Activated CD4-positive, alpha-beta T cell treated with anti-CD3 and anti-CD28 coated beads, Interleukin-2, amount 10 ng/mL, durations not matched to agents 7 days and 5 days (primary cell): ENCODE measurements at regions of chr2 and their contacts with region 1.

Region 1: DNA sequence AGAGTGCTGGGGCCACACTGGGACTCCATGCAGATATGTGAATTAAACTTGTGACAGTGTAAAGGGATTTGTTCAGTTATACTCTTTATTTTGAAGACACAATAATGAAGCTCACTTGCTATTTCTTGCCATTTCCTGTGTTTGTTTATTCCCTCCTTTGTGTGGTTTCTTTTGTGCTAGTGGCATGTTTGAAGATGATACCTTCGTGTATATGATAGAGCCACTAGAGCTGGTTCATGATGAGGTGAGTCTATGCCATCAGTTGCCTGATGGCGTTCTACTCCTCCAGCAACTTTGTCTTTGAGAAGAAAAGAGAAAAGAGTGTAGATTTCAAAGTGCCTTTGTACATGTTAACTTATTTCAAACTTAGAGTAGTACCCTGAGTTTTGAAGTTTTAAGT is 99.2 kb upstream of the FAM237A start:
- DNase-seq: no peak
- H3K4me3 Mint-ChIP-seq: no peak overlapping the region
- H3K27ac Mint-ChIP-seq: peak overlapping the region; percentile 22
- H3K4me1 Mint-ChIP-seq: peaks cover 18% of the 10 kb centered on the region
- H3K27me3 Mint-ChIP-seq: peaks cover 8% of the 10 kb centered on the region

Region 2: GRCh38 chr2:206432432-206433082 is 110.5 kb before region 1 on chr2:
- CTCF ChIA-PET with region 1: no interaction called
- POLR2A ChIA-PET with region 1: interaction called, 16 read pairs
- DNase-seq: no peak
- H3K4me3 Mint-ChIP-seq: no peak overlapping the region
- H3K27ac Mint-ChIP-seq: no peak overlapping the region
- H3K4me1 Mint-ChIP-seq: no peaks in the 10 kb centered on the region
- H3K27me3 Mint-ChIP-seq: peaks cover 21% of the 10 kb centered on the region